ENCODE measurements at regions of chr6 and their contacts with region 1.

Region 1: DNA sequence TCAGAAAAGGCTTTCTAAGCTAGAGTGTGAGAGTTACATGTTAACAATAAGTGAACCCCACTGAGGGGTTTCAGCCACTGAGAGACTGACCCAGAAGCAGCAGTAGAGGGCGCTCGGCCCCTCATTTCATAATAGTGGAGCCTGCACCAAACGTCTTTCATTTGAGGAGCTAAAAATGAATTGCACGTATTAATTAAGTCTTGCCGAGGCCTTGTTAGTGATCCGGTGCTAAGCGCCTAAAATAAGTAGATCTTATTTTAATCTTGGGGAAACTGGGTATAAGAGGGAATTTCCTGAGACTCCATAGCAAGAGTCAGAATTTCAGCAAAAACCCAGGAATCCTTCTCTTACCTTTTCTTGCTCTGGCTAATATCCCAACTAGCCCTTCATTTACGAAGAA is 209.7 kb downstream of the FARS2 start:
- DNase-seq: peak; percentile 66
- H3K4me3 ChIP-seq: no peak overlapping the region
- H3K27ac ChIP-seq: no peak overlapping the region
- H3K4me1 ChIP-seq: peaks cover 6% of the 10 kb centered on the region
- H3K27me3 ChIP-seq: no peaks in the 10 kb centered on the region
- CTCF ChIP-seq: peak; percentile 87 to 91
- POLR2A ChIP-seq: no peak

Region 2: GRCh38 chr6:5278047-5278446 is 193.0 kb before region 1 on chr6:
- CTCF ChIA-PET with region 1: no interaction called
- POLR2A ChIA-PET with region 1: no interaction called
- dilution Hi-C with region 1: no loop called
- intact Hi-C with region 1: no loop called
- DNase-seq: no peak
- H3K4me3 ChIP-seq: no peak overlapping the region
- H3K27ac ChIP-seq: no peak overlapping the region
- H3K4me1 ChIP-seq: no peaks in the 10 kb centered on the region
- H3K27me3 ChIP-seq: no peaks in the 10 kb centered on the region
- CTCF ChIP-seq: no peak
- POLR2A ChIP-seq: no peak

Region 3: GRCh38 chr6:5443491-5443890 is 27.6 kb before region 1 on chr6:
- CTCF ChIA-PET with region 1: interaction called, 10 read pairs
- POLR2A ChIA-PET with region 1: no interaction called
- dilution Hi-C with region 1: no loop called
- intact Hi-C with region 1: no loop called
- DNase-seq: no peak
- H3K4me3 ChIP-seq: no peak overlapping the region
- H3K27ac ChIP-seq: no peak overlapping the region
- H3K4me1 ChIP-seq: peaks cover 5% of the 10 kb centered on the region
- H3K27me3 ChIP-seq: no peaks in the 10 kb centered on the region
- CTCF ChIP-seq: no peak
- POLR2A ChIP-seq: no peak

Region 4: DNA sequence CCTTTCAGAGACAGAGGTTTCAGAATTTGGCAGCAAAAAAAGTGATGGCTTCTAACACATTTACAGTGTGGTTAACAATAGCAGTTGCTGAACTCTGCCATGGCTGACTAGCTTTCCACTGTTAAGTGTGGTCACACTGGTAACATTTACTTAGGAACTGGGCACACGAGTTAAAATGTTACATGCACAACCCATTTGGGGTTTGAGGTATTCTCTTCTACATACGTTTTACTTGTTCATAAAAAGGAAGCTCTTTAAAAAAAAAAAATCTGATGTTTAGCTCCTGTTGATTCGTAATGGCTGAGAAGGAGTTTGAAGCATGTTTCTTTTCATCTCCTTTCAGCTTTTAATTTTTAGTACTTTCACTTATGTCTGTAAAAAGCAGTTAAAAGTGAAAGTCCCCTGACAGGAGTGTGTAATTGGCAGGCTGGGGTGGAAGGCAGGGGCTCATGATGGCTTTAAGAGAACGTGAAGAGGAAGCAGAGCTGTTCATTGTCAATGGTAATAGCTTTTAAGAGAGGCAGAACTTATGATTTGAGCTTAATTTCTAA is 36.2 kb after region 1 on chr6:
- CTCF ChIA-PET with region 1: interaction called, 16 read pairs
- POLR2A ChIA-PET with region 1: no interaction called
- dilution Hi-C with region 1: no loop called
- intact Hi-C with region 1: no loop called
- DNase-seq: no peak
- H3K4me3 ChIP-seq: no peak overlapping the region
- H3K27ac ChIP-seq: no peak overlapping the region
- H3K4me1 ChIP-seq: no peaks in the 10 kb centered on the region
- H3K27me3 ChIP-seq: no peaks in the 10 kb centered on the region
- CTCF ChIP-seq: no peak
- POLR2A ChIP-seq: no peak

Region 5: DNA sequence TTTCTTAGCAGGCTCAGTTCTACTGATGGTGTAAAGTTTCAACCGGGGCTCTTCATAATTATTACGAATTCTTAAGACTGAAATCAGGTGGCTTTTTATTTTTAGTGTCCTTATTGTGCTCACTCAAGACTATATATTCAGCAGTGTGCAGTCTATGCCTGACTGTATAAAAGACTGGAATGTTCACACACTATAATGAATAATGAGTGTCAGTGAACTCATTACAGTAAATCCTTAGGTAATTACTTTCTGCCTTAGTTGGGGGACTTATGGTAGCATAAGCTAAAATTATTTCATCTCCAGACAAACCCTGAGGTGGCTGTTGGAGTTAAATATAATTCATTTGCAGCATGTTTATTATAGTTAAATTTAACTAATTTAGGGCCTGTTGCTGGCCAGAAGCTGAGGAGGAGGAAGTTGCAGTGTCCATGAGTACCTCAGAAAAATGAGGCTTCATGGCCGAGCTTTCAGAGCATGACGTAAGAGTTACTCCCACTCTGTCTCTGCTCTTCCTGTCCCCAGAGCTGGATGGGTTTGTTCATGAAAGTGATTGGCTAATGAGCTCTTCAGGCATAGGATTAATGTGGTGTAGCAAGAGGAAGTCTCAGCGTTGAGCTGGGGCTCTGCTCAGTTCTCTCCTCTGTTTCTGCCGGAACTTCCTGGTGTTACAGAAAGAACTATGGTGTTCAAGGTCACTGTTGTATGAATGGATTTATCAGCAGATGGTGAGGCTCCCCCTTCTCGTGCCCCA is 199.9 kb after region 1 on chr6:
- CTCF ChIA-PET with region 1: interaction called, 8 read pairs
- POLR2A ChIA-PET with region 1: no interaction called
- dilution Hi-C with region 1: no loop called
- intact Hi-C with region 1: loop called (anchors 5 kb)
- DNase-seq: no peak
- H3K4me3 ChIP-seq: no peak overlapping the region
- H3K27ac ChIP-seq: no peak overlapping the region
- H3K4me1 ChIP-seq: no peaks in the 10 kb centered on the region
- H3K27me3 ChIP-seq: no peaks in the 10 kb centered on the region
- CTCF ChIP-seq: no peak
- POLR2A ChIP-seq: no peak

Region 6: DNA sequence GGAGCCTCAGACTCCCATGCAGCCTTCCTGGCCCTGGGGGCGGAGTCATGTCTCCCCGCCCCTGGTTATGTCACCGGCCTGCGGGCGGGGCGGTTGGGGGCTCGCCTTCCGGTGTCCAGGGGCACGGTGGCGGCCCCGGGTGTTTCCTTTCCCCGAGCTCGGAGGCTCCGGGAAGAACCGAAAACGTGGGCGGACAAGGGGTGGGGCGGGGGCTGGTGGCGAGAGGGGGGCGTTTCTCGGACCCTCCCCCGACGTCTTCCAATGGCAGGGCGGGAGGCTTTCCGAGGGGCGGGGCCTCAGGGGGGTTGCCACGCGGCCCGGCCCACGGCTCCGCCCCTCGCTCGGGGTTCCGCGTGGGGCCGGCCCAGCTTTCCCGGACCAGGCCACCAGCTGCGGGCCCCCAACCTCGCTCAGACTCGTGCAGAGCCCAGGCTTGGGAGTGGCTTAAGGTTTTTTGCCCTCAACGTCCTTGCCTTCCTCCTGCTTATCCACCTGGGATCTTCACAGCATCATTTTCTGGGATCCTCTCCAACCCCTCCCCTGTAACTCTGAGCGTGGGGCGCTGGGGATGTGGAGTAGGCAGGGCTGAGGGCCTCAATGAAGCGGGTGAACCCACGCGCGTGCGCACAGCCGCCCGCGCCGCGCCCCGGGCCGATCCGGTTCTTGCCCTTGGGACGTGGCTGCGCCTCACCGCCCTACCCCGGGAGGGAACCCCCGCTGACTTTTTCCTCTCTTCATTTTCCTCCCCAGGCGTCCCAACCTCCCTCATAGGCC is 537.8 kb after region 1 on chr6:
- CTCF ChIA-PET with region 1: interaction called, 10 read pairs
- POLR2A ChIA-PET with region 1: no interaction called
- dilution Hi-C with region 1: no loop called
- intact Hi-C with region 1: loop called (anchors 1 kb)
- DNase-seq: peak; percentile 86
- H3K4me3 ChIP-seq: peak overlapping the region; percentile 21 to 86 (median 43)
- H3K27ac ChIP-seq: no peak overlapping the region
- H3K4me1 ChIP-seq: peaks cover 21% of the 10 kb centered on the region
- H3K27me3 ChIP-seq: peaks cover 34 to 57% of the 10 kb centered on the region in 2 experiments
- CTCF ChIP-seq: no peak
- POLR2A ChIP-seq: no peak

Region 7: GRCh38 chr6:6315660-6316059 is 844.6 kb after region 1 on chr6:
- CTCF ChIA-PET with region 1: interaction called, 4 read pairs
- POLR2A ChIA-PET with region 1: no interaction called
- dilution Hi-C with region 1: no loop called
- intact Hi-C with region 1: loop called (anchors 5 kb)
- DNase-seq: peak; percentile 46
- H3K4me3 ChIP-seq: no peak overlapping the region
- H3K27ac ChIP-seq: no peak overlapping the region
- H3K4me1 ChIP-seq: peaks cover 4% of the 10 kb centered on the region
- H3K27me3 ChIP-seq: peaks cover 4 to 5% of the 10 kb centered on the region in 2 experiments
- CTCF ChIP-seq: peak; percentile 70 to 77
- POLR2A ChIP-seq: no peak

Measured in endothelial cell of umbilical vein (primary cell).